ENCODE measurements at regions of chr17 and their contacts with region 1.

Region 1: DNA sequence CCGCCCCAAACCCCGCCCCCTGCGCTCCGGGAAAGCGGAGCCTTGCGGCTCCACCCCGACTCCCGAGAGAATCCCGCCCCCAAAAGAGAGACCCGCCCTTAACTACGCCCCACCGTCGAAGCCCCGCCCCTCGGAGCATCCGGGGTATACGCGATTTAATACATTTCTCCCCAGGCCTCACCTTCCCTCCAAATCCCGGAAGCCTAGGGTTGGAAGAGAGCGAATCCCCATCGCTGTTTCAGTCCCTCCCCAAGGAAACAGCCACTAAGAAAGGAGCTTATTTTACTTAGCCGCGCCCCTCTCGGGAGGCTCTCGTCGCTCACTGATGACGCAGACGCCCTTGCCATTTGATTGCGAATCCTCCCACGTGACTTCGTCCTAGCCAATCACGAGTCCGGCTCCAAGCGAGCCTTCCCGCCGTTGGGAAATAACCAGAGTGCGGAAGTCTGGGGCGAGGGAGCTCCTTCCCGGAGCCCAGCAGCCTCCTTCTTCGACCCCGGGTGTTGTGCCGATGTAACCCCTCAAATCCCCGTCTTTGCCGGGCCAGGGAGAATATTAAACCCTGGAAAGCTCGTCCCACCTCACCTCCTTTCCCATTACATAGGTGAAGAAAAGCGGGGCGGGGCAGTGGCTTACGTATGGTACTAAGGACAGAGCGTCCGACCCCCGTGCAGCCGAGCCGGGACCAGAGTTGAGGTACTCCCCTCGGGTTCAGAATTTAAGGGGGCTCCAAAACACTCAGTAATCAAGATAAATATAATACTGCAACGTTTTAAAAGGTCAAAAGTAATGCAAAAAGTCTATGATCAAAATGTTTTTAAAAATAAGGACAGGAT is 462 bp upstream of the FDXR start:
- DNase-seq: peak; percentile 98
- ATAC-seq: peak; percentile 97
- H3K4me3 ChIP-seq: peak overlapping the region; percentile 83 to 86
- H3K27ac ChIP-seq: peak overlapping the region; percentile 97
- H3K4me1 ChIP-seq: peaks cover 9% of the 10 kb centered on the region
- H3K27me3 ChIP-seq: no peaks in the 10 kb centered on the region
- CTCF ChIP-seq: no peak

Region 2: DNA sequence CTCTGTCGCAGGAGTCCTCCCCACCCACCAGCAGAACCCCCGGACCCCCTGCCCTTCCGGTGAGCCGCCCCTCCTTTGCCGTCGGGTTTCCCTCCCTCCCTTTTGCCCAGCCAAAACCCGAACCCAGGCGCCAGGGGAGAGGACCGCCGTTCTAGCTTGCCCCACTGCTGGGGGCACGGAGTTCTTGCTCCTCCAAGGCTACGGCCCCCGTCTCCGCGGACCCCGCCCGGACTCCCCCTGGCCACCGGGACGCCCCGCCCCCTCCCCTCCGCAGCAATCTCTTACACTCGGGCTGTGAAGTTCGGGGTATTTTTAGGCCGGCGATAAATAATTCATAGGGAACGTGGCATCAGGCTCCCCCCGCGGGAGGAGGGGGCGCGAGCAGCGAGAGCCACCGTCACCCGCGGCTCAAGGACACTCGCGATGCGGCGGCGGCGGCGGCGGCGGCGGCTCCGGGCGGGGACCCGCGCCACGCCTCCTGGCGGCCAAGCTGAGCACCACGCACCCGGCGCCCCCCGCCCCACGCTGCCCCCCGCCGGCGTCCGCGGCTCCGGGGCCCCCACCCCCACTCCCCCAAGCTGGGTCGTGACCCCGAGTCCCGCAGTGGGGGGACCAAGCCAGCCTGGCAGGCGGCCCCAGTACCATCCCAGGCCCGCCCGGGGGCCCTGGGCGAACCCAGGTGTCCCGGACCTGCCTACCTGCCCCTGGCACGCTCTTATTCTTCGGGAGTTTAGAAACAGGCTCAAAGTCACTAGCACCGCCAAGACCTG is 13.6 kb before region 1 on chr17 and contains the start of gene GRIN2C:
- CTCF ChIA-PET with region 1: interaction called, 6 read pairs
- POLR2A ChIA-PET with region 1: interaction called, 13 read pairs
- in situ Hi-C with region 1: no loop called
- intact Hi-C with region 1: no loop called
- DNase-seq: no peak
- ATAC-seq: no peak
- H3K4me3 ChIP-seq: peak within 1 kb of the TSS; percentile 14 to 24
- H3K27ac ChIP-seq: no peak within 1 kb of the TSS
- H3K4me1 ChIP-seq: peaks cover 21% of the 10 kb centered on the region
- H3K27me3 ChIP-seq: peaks cover 23% of the 10 kb centered on the region
- CTCF ChIP-seq: peak; percentile 89
- total RNA-seq, gene GRIN2C: 0.10 TPM

Measured in Panc1 (cell line).